Endothelial cell of umbilical vein (primary cell): ENCODE measurements at regions of chr7 and their contacts with region 1.

Region 1: DNA sequence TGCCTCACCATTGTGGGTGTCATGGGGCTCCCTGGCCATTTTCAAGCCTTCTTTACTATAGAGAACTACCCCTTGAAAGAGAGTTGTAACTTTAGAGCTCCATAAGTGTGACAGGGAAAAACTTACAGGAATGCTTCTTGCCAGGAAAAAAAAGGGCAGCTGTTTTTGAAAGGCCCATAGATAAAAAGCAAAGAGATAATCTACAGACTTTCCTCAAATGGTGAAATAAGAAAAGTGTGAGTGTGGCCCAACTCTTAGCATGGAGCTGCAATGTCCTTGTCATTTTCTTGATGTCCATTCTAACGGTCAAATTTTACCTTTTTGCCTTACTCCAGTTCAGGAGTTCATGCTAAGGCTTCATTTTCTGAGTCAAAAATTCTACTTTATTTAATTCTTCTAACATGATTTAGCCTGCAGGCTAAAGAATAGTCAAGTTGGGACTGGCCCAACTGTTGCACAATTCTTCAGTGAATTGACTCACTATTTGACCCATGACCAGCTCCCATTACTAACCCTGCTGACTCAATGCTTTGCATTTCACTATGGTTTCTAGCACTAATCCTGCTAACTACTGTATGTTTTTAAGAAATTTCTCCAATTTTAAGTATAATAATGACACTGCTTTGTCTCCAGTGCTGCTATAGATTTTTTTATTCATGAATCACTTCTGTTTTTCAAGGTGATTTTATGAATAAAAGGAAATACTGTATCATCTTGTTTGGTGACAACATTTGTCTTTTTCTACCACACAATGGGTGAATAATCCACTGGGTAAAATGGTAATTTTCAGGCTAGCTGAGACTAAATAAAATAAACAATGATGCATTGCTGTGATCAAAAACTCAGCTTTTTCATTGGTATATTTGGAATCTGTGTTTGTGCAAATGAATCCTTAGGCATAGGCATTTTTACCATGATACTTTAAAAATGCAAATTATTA is 41.4 kb upstream of the SGCE start:
- DNase-seq: peak; percentile 90
- H3K4me3 ChIP-seq: no peak overlapping the region
- H3K27ac ChIP-seq: peak overlapping the region; percentile 83
- H3K4me1 ChIP-seq: peaks cover 43% of the 10 kb centered on the region
- H3K27me3 ChIP-seq: no peaks in the 10 kb centered on the region
- CTCF ChIP-seq: no peak
- POLR2A ChIP-seq: no peak

Region 2: GRCh38 chr7:94301024-94301586 is 396.2 kb before region 1 on chr7:
- CTCF ChIA-PET with region 1: no interaction called
- POLR2A ChIA-PET with region 1: no interaction called
- dilution Hi-C with region 1: no loop called
- intact Hi-C with region 1: loop called (anchors 1 kb)
- DNase-seq: peak; percentile 93
- H3K4me3 ChIP-seq: no peak overlapping the region
- H3K27ac ChIP-seq: peak overlapping the region; percentile 72
- H3K4me1 ChIP-seq: peaks cover 24% of the 10 kb centered on the region
- H3K27me3 ChIP-seq: no peaks in the 10 kb centered on the region
- CTCF ChIP-seq: no peak
- POLR2A ChIP-seq: no peak

Region 3: GRCh38 chr7:94509879-94510581 is 187.3 kb before region 1 on chr7:
- CTCF ChIA-PET with region 1: no interaction called
- POLR2A ChIA-PET with region 1: no interaction called
- dilution Hi-C with region 1: no loop called
- intact Hi-C with region 1: loop called (anchors 2 kb)
- DNase-seq: peak; percentile 69
- H3K4me3 ChIP-seq: peak overlapping the region; percentile 59 to 80 (median 60)
- H3K27ac ChIP-seq: peak overlapping the region; percentile 65
- H3K4me1 ChIP-seq: peaks cover 20% of the 10 kb centered on the region
- H3K27me3 ChIP-seq: no peaks in the 10 kb centered on the region
- CTCF ChIP-seq: peak in 1 of 2 donors; percentile 47
- POLR2A ChIP-seq: peak; percentile 55

Region 4: GRCh38 chr7:94584113-94584512 is 113.2 kb before region 1 on chr7:
- CTCF ChIA-PET with region 1: no interaction called
- POLR2A ChIA-PET with region 1: no interaction called
- dilution Hi-C with region 1: no loop called
- intact Hi-C with region 1: no loop called
- DNase-seq: no peak
- H3K4me3 ChIP-seq: no peak overlapping the region
- H3K27ac ChIP-seq: no peak overlapping the region
- H3K4me1 ChIP-seq: no peaks in the 10 kb centered on the region
- H3K27me3 ChIP-seq: no peaks in the 10 kb centered on the region
- CTCF ChIP-seq: no peak
- POLR2A ChIP-seq: no peak

Region 5: DNA sequence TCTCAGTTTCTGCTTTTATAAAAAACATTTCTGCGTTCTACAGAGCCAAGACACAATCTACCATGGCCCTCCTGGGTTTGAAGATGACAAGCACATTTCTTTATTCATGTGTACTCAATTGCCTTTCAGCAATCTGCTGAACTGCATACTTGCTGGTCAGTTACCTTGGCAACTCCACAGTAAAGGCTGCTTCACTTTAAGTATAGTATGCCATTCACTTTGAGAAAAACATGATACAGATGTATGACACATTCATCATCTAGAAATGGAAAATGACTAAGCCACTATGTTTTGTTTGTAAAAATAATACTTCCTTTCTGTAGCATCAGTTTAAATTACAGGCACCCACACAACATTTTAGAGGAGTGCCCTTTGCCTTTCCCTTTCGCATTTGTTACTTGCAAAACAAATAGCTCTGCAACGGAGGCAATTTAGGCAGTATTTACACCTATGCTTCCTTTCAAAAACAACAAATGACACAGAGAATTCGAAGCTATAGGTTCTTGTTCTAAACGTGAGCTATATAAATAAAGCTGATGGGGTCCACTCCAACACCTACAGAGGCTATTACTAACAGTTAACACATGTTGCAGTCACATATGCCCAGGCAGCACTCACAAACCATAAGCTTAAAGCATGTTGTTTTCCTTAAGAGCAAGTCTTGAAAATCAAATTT is 64.8 kb before region 1 on chr7:
- CTCF ChIA-PET with region 1: no interaction called
- POLR2A ChIA-PET with region 1: no interaction called
- dilution Hi-C with region 1: no loop called
- intact Hi-C with region 1: loop called (anchors 2 kb)
- DNase-seq: peak; percentile 84
- H3K4me3 ChIP-seq: no peak overlapping the region
- H3K27ac ChIP-seq: peak overlapping the region; percentile 51
- H3K4me1 ChIP-seq: peaks cover 11% of the 10 kb centered on the region
- H3K27me3 ChIP-seq: no peaks in the 10 kb centered on the region
- CTCF ChIP-seq: no peak
- POLR2A ChIP-seq: no peak

Region 6: DNA sequence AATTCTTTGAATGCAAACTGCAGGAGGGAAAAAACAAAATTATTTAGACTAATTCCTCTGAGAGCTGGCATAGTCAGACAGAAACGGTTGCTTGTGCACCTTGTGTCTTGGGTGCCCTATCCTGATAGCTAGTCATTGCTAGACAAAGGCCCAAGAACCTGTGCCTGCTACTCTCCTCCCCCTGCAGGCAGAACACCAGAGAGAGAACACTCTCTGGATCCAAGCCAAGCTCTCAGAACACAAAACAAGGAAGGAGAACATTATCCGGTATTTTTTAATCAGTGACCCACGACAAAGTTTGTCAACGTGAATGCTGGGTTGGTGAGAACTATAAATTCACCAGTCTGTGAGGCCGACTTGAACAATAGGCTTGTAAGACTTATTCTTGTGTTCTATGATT is 191.2 kb after region 1 on chr7:
- CTCF ChIA-PET with region 1: no interaction called
- POLR2A ChIA-PET with region 1: no interaction called
- dilution Hi-C with region 1: no loop called
- intact Hi-C with region 1: loop called (anchors 2 kb)
- DNase-seq: peak; percentile 85
- H3K4me3 ChIP-seq: no peak overlapping the region
- H3K27ac ChIP-seq: no peak overlapping the region
- H3K4me1 ChIP-seq: peaks cover 3% of the 10 kb centered on the region
- H3K27me3 ChIP-seq: no peaks in the 10 kb centered on the region
- CTCF ChIP-seq: peak; percentile 10 to 44
- POLR2A ChIP-seq: no peak

Region 7: GRCh38 chr7:95434557-95435421 is 737.5 kb after region 1 on chr7 and contains the start of gene PON2:
- CTCF ChIA-PET with region 1: no interaction called
- POLR2A ChIA-PET with region 1: no interaction called
- dilution Hi-C with region 1: no loop called
- intact Hi-C with region 1: loop called (anchors 2 kb)
- DNase-seq: peak; percentile 84
- H3K4me3 ChIP-seq: peak within 1 kb of the TSS; percentile 74 to 97 (median 89)
- H3K27ac ChIP-seq: peak within 1 kb of the TSS; percentile 78
- H3K4me1 ChIP-seq: peaks cover 18% of the 10 kb centered on the region
- H3K27me3 ChIP-seq: no peaks in the 10 kb centered on the region
- CTCF ChIP-seq: no peak
- POLR2A ChIP-seq: peak; percentile 98
- total RNA-seq, gene PON2: 125 and 134 TPM in 2 replicates